Breast epithelium (tissue), 4 donors: ENCODE measurements at regions of chr1 and their contacts with region 1.

Region 1: GRCh38 chr1:93743465-93743864 is 61.8 kb upstream of the BCAR3 start:
- DNase-seq: no peak
- H3K4me3 ChIP-seq: no peak overlapping the region
- H3K27ac ChIP-seq: no peak overlapping the region
- H3K4me1 ChIP-seq: peaks cover 0 to 3% of the 10 kb centered on the region in 2 donors
- H3K27me3 ChIP-seq: no peaks in the 10 kb centered on the region
- CTCF ChIP-seq: no peak
- POLR2A ChIP-seq: no peak

Region 2: DNA sequence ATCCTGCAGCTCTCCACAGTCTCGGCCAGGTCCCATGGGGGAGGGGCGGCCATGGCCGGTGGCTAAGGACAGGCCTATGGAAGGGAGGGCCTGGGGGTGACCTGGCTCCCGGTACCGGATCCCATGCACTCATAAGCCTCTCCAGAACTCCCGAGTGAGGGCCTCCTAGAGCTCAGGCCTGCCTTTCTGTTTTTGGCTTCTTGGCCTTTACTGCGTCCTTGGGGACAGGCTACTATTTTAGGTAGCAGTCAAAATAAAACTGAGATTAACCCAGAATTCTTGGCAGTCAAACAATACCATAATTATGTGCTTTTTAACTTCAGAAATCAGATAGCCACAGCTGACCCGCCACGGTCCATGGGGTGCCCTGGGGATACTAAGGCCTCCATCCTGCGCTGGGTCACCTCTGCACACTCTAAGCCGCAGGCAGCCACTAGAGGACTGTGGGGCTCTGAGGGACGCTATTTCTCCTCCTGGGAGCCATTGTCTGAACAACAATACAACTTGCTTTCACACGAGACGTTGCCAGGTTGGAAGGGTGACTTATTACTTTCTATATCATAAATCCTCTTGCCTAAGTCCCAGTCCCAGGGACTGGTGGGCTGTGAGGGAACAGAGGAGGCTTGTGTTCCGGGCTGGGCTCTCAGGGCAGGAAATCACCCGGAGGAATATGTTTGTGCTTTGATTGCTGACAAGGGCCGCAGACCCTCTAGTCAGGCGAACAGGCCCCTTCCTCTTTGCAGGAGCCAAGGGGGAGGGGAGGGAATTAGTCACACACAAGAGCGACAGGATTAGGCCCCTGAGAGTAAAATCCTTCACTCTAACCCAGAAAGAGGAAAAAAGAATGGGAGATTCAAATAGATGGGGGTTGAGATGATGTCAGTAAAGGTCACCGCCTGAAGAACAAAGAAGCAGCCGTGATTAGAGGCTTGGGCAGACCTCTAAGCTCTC is 21.1 kb before region 1 on chr1:
- intact Hi-C with region 1: no loop called
- DNase-seq: no peak
- H3K4me3 ChIP-seq: no peak overlapping the region
- H3K27ac ChIP-seq: peak overlapping the region in 1 of 2 donors; percentile 45
- H3K4me1 ChIP-seq: no peaks in the 10 kb centered on the region
- H3K27me3 ChIP-seq: no peaks in the 10 kb centered on the region
- CTCF ChIP-seq: no peak
- POLR2A ChIP-seq: no peak

Region 3: DNA sequence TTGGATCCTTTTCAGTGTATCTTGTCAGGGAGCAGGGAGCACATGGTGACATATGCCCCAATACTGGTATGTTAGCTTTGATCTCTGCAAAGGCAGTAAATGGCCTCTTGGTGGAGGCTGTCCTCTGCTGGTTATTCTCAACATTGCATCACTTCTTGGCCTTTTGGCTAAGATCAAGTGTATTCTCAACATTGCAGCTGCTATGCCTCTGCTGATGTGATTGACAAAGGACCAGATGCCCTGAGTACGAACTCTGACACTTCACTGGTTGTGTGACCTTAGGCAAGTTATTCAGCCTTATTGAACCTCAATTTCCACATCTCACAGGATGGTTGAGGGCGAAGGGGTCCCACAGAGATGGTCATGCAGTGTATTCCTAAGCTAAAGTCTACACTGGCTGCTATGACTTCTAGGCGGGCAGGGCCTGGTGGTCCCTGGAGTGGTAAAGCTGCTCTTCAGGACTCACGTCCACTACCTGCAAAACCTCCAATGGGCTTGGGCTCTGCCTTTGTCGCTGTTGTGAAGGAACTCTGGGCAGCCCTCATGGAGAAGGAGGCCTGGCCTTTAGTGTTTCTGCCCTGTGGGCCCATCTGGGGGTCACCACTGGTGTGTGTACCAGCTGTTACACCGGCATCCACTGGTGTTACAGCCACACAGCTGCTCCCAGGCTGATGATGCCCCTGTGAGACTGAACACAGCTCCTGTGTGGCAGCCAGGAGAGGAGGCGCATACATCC is 70.8 kb after region 1 on chr1:
- intact Hi-C with region 1: loop called (anchors 2 kb)
- DNase-seq: peak in 1 of 2 donors; percentile 66
- H3K4me3 ChIP-seq: no peak overlapping the region
- H3K27ac ChIP-seq: no peak overlapping the region
- H3K4me1 ChIP-seq: no peaks in the 10 kb centered on the region
- H3K27me3 ChIP-seq: no peaks in the 10 kb centered on the region
- CTCF ChIP-seq: peak; percentile 92 to 99 (median 98)
- POLR2A ChIP-seq: no peak